WTC11 (cell line): ENCODE measurements at regions of chr15 and their contacts with region 1.

Region 1: GRCh38 chr15:80587531-80588456 is 107.3 kb upstream of the ABHD17C start:
- DNase-seq: no peak
- ATAC-seq: no peak
- H3K4me3 Mint-ChIP-seq: no peak overlapping the region
- H3K27ac Mint-ChIP-seq: no peak overlapping the region
- H3K4me1 Mint-ChIP-seq: peaks cover 26% of the 10 kb centered on the region
- H3K27me3 Mint-ChIP-seq: no peaks in the 10 kb centered on the region
- CTCF ChIP-seq: no peak

Region 2: GRCh38 chr15:80199366-80199765 is 388.4 kb before region 1 on chr15:
- CTCF ChIA-PET with region 1: no interaction called
- POLR2A ChIA-PET with region 1: no interaction called
- DNase-seq: no peak
- ATAC-seq: peak; percentile 82
- H3K4me3 Mint-ChIP-seq: no peak overlapping the region
- H3K27ac Mint-ChIP-seq: peak overlapping the region; percentile 37
- H3K4me1 Mint-ChIP-seq: peaks cover 21% of the 10 kb centered on the region
- H3K27me3 Mint-ChIP-seq: no peaks in the 10 kb centered on the region; the same call in none of the 2 replicates
- CTCF ChIP-seq: no peak

Region 3: DNA sequence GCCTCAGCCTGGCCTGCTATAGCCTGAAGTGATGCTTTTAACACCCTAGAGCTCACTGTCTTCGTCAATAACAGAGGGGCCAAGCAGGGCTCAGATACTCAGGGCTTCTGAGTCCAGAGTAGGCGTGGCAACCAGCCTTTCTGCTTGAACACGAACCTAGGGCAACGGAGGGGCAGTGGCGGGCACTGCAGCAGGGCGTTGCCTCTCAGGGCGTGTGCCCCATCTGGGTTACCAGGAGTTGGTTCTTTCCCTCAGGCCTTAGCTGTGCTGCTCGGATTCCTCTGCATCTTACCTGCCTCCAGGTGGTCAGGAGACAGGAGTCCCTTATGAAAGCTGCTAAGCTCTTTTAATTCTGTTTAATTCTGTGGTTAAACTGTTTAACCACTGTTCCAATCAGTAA is 137.5 kb before region 1 on chr15:
- CTCF ChIA-PET with region 1: interaction called, 10 read pairs
- POLR2A ChIA-PET with region 1: no interaction called
- DNase-seq: no peak
- ATAC-seq: 0 out of 2 replicates have a peak, but pooled peaks have one; percentile 17
- H3K4me3 Mint-ChIP-seq: no peak overlapping the region
- H3K27ac Mint-ChIP-seq: no peak overlapping the region
- H3K4me1 Mint-ChIP-seq: peaks cover 23% of the 10 kb centered on the region
- H3K27me3 Mint-ChIP-seq: no peaks in the 10 kb centered on the region; the same call in 1 of the 2 replicates
- CTCF ChIP-seq: no peak

Region 4: GRCh38 chr15:80475572-80475971 is 112.2 kb before region 1 on chr15:
- CTCF ChIA-PET with region 1: interaction called, 10 read pairs
- POLR2A ChIA-PET with region 1: no interaction called
- DNase-seq: no peak
- ATAC-seq: no peak
- H3K4me3 Mint-ChIP-seq: no peak overlapping the region
- H3K27ac Mint-ChIP-seq: no peak overlapping the region
- H3K4me1 Mint-ChIP-seq: peaks cover 52% of the 10 kb centered on the region
- H3K27me3 Mint-ChIP-seq: no peaks in the 10 kb centered on the region
- CTCF ChIP-seq: no peak

Region 5: GRCh38 chr15:80567721-80568157 is 20.1 kb before region 1 on chr15:
- CTCF ChIA-PET with region 1: interaction called, 19 read pairs
- POLR2A ChIA-PET with region 1: no interaction called
- DNase-seq: peak; percentile 52
- ATAC-seq: peak; percentile 90
- H3K4me3 Mint-ChIP-seq: no peak overlapping the region
- H3K27ac Mint-ChIP-seq: no peak overlapping the region
- H3K4me1 Mint-ChIP-seq: peaks cover 22% of the 10 kb centered on the region
- H3K27me3 Mint-ChIP-seq: no peaks in the 10 kb centered on the region; the same call in 1 of the 2 replicates
- CTCF ChIP-seq: no peak; the same call in 1 of the 2 replicates

Region 6: DNA sequence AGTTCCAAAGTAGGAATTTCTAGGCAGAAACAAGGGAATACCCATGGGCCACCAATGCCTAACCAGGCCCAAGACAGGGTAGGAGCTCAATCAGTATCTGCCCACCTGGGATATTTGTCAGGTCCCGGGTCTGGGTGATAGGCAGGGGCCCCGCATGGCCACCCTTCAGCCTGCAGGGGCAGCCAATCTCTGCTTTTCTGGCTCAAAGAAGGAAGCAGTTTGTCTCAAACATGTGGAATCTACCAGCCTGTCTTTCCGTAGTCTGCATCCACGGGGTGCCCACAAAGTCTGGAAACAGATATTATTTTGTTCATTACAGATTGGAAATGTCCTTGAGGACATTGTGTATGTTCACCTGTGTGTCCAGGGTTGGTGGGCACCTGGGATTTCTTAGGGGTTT is 247.5 kb after region 1 on chr15:
- CTCF ChIA-PET with region 1: no interaction called
- POLR2A ChIA-PET with region 1: no interaction called
- DNase-seq: peak; percentile 45
- ATAC-seq: peak; percentile 78
- H3K4me3 Mint-ChIP-seq: no peak overlapping the region
- H3K27ac Mint-ChIP-seq: 0 out of 2 replicates have a peak overlapping the region, but pooled peaks have one; percentile 16
- H3K4me1 Mint-ChIP-seq: peaks cover 70% of the 10 kb centered on the region
- H3K27me3 Mint-ChIP-seq: no peaks in the 10 kb centered on the region
- CTCF ChIP-seq: no peak